Heart left ventricle (tissue), 16 donors: ENCODE measurements at regions of chr7 and their contacts with region 1.

Region 1: GRCh38 chr7:143263266-143264195 is at the start of gene GSTK1:
- DNase-seq: peak; percentile 88 to 94 (median 93)
- ATAC-seq: peak; percentile 98 to 99 (median 98)
- H3K4me3 ChIP-seq: peak within 1 kb of the TSS; percentile 45 to 90 (median 80)
- H3K27ac ChIP-seq: peak within 1 kb of the TSS; percentile 78 to 94 (median 89)
- H3K4me1 ChIP-seq: peaks cover 3 to 32% (median 19%) of the 10 kb centered on the region in 12 donors
- H3K27me3 ChIP-seq: no peaks in the 10 kb centered on the region
- CTCF ChIP-seq: no peak
- POLR2A ChIP-seq: peak in 1 of 2 donors; percentile 89
- total RNA-seq, gene GSTK1: 174 to 349 (median 281) TPM

Region 2: DNA sequence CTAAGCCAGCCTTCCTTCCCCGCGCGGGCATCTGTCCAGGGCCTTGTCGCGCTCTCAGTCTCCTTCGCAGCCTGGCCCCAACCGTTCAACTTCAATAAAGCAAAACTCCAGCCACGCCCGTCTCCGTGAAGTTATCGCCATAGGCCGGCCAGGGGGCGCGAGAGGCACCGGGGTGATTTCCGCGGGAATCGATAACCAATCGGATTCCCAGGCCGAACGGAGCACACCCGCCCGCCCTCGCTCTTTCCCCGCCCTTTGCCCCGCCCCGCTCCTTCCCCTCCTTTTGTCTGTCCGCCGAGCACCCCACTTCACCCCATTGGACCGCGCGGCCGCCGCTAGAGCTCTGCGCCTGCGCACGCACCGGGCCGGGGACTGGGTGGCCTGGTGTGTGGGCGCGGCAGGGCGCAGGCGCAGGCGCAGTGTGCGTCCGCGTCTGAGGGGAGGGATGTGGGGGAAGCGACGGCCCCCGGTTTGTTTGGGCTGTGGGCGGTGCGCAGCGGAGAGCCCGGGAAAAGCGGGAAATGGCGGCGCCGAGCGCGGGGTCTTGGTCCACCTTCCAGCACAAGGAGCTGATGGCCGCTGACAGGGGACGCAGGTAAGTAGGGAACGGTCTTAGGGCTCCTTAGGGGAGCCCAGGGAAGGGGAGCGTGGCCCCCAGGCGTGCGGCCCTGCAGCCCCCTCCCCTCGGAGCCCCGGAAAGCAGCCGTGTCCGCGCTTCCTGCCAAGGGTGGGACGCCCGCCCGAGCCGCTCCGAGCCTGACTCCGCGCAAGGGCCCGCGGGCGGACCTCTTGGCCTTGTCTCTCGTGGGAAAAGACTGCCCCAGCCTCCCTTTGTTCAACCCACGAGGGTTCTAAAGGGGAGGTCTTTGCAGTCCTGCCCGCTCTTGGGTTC is 24.6 kb after region 1 on chr7 and contains the start of gene CASP2:
- intact Hi-C with region 1: loop called in 2 of 10 experiments (anchors 1 to 2 kb)
- DNase-seq: peak; percentile 99
- ATAC-seq: peak; percentile 96 to 98 (median 97)
- H3K4me3 ChIP-seq: peak within 1 kb of the TSS; percentile 60 to 99 (median 86)
- H3K27ac ChIP-seq: peak within 1 kb of the TSS; percentile 76 to 97 (median 93)
- H3K4me1 ChIP-seq: peaks cover 0 to 60% (median 41%) of the 10 kb centered on the region in 12 donors
- H3K27me3 ChIP-seq: no peaks in the 10 kb centered on the region
- CTCF ChIP-seq: peak in 11 of 12 donors; percentile 13 to 66 (median 46)
- POLR2A ChIP-seq: peak in 1 of 2 donors; percentile 70
- total RNA-seq, gene CASP2: 7.4 to 18.3 (median 13.8) TPM

Region 3: DNA sequence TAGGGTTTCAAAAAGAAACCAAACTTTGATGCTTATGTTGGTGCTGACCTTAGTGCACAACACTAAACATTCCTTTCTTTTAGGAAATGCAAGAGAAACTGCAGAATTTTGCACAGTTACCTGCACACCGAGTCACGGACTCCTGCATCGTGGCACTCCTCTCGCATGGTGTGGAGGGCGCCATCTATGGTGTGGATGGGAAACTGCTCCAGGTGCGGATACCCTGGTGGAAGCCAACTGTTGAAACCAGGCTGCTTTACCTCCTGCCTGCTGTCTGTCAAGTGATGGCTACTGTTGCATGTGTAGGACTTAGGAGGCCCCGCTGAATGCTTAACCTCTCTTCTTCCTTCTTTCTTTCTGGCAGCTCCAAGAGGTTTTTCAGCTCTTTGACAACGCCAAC is 36.3 kb after region 1 on chr7:
- intact Hi-C with region 1: loop called in 4 of 10 experiments (anchors 5 kb)
- DNase-seq: peak in 1 of 5 donors; percentile 28
- ATAC-seq: peak in 3 of 4 donors; percentile 55 to 70 (median 63)
- H3K4me3 ChIP-seq: no peak overlapping the region
- H3K27ac ChIP-seq: peak overlapping the region in 6 of 12 donors; percentile 8 to 66 (median 55)
- H3K4me1 ChIP-seq: peaks cover 0 to 48% (median 21%) of the 10 kb centered on the region in 12 donors
- H3K27me3 ChIP-seq: no peaks in the 10 kb centered on the region
- CTCF ChIP-seq: peak; percentile 24 to 65 (median 46)
- POLR2A ChIP-seq: no peak

Region 4: DNA sequence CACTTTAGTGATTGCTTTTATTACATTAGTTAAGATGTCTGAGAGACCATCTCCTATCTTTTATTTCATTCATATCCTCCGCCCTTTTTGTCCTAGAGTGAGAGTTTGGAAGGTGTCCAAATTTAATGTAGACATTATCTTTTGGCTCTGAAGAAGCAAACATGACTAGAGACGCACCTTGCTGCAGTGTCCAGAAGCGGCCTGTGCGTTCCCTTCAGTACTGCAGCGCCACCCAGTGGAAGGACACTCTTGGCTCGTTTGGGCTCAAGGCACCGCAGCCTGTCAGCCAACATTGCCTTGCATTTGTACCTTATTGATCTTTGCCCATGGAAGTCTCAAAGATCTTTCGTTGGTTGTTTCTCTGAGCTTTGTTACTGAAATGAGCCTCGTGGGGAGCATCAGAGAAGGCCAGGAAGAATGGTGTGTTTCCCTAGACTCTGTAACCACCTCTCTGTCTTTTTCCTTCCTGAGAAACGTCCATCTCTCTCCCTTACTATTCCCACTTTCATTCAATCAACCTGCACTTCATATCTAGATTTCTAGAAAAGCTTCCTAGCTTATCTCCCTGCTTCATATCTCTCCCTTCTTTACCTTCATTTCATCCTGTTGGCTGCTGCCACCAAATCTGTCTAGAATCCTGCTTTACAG is 42.0 kb after region 1 on chr7:
- intact Hi-C with region 1: loop called in 3 of 10 experiments (anchors 5 kb)
- DNase-seq: peak; percentile 64 to 83 (median 70)
- ATAC-seq: peak in 3 of 4 donors; percentile 86 to 93 (median 89)
- H3K4me3 ChIP-seq: no peak overlapping the region
- H3K27ac ChIP-seq: no peak overlapping the region
- H3K4me1 ChIP-seq: peaks cover 0 to 31% (median 0%) of the 10 kb centered on the region in 12 donors
- H3K27me3 ChIP-seq: no peaks in the 10 kb centered on the region
- CTCF ChIP-seq: peak; percentile 71 to 87 (median 80)
- POLR2A ChIP-seq: no peak

Region 5: GRCh38 chr7:143316492-143316891 is 53.0 kb after region 1 on chr7:
- intact Hi-C with region 1: no loop called
- DNase-seq: no peak
- ATAC-seq: no peak
- H3K4me3 ChIP-seq: no peak overlapping the region
- H3K27ac ChIP-seq: no peak overlapping the region
- H3K4me1 ChIP-seq: peaks cover 0 to 16% (median 0%) of the 10 kb centered on the region in 12 donors
- H3K27me3 ChIP-seq: no peaks in the 10 kb centered on the region
- CTCF ChIP-seq: no peak
- POLR2A ChIP-seq: no peak

Region 6: DNA sequence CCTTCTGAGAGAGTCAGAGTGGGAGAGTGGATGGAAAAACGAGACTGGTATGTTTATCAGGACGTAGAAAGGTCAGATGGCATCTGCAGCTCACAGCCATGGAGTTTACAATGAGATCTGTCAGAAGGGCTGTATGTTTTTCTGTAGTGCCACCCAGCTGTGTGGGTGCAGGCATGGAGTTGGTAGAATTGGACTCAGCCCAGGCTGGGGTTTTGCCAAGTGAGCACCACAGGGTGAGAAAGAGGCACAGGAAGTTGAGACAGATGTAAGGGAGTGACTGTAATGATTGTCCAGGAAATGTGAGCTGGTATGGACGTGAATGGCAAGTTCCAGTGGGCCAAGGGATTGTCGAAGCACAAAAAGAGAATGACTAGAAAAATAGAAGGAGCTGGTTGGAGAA is 108.5 kb after region 1 on chr7:
- intact Hi-C with region 1: loop called in 1 of 10 experiments (anchors 10 kb)
- DNase-seq: peak in 3 of 5 donors; percentile 64 to 73 (median 67)
- ATAC-seq: peak in 3 of 4 donors; percentile 64 to 76 (median 74)
- H3K4me3 ChIP-seq: no peak overlapping the region
- H3K27ac ChIP-seq: peak overlapping the region in 1 of 12 donors; percentile 70
- H3K4me1 ChIP-seq: peaks cover 0 to 56% (median 0%) of the 10 kb centered on the region in 12 donors
- H3K27me3 ChIP-seq: no peaks in the 10 kb centered on the region
- CTCF ChIP-seq: peak in 3 of 12 donors; percentile 25 to 34 (median 26)
- POLR2A ChIP-seq: no peak